Adrenal gland (tissue), 19 donors: ENCODE measurements at regions of chr5 and their contacts with region 1.

Region 1: DNA sequence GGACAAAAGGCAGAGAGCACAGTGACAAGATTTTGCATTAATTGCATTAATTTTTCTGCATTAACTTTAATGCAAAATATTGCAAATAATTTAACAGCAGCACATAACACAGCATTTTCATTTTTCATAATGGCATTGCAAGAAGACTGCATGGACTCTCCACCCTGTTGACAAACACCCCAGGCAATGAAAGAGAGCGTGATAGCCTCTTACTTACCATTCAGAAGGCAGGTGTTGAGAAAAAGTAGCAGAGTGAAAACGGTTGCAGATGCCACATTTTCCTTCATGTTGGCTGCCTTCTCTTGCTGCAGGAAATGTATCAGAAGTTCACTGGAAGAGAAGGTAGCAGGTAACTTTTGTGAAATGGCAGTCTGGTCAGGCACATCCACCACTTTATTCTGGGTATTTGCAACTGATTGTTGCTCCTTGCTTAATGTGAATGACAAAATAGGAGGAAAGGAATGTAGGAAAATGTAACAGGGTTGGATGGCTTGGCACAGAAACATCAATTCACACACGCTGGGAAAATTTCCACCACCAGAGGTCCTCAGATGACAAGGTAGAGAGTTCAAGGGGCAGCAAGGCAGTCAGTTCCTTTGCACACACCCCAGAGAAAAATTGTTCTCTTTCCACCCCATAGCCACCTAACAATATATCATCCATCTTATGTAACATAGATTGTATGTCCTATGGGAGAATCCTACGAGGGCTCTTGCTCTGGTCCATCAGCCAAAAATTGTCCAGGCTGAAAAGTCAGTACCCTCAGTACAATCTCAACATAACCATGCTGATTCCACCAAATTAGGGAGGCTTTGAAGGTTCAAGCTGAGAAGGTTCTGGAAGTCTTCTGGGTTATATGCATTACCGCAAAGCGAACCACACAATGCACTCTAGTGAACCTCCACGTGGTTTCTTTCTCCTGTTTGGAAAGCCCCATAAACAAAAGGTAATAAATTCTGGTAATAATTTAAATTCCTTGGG is 41.9 kb upstream of the AGXT2 start:
- DNase-seq: peak; percentile 46 to 81 (median 67)
- H3K4me3 ChIP-seq: no peak overlapping the region
- H3K27ac ChIP-seq: no peak overlapping the region
- H3K4me1 ChIP-seq: peaks cover 0 to 4% of the 10 kb centered on the region in 2 donors
- H3K27me3 ChIP-seq: no peaks in the 10 kb centered on the region
- CTCF ChIP-seq: peak; percentile 53 to 78 (median 76)
- POLR2A ChIP-seq: no peak

Region 2: GRCh38 chr5:35129918-35130485 is 40.4 kb after region 1 on chr5:
- intact Hi-C with region 1: no loop called
- DNase-seq: no peak
- H3K4me3 ChIP-seq: no peak overlapping the region
- H3K27ac ChIP-seq: no peak overlapping the region
- H3K4me1 ChIP-seq: no peaks in the 10 kb centered on the region
- H3K27me3 ChIP-seq: no peaks in the 10 kb centered on the region
- CTCF ChIP-seq: no peak
- POLR2A ChIP-seq: no peak

Region 3: DNA sequence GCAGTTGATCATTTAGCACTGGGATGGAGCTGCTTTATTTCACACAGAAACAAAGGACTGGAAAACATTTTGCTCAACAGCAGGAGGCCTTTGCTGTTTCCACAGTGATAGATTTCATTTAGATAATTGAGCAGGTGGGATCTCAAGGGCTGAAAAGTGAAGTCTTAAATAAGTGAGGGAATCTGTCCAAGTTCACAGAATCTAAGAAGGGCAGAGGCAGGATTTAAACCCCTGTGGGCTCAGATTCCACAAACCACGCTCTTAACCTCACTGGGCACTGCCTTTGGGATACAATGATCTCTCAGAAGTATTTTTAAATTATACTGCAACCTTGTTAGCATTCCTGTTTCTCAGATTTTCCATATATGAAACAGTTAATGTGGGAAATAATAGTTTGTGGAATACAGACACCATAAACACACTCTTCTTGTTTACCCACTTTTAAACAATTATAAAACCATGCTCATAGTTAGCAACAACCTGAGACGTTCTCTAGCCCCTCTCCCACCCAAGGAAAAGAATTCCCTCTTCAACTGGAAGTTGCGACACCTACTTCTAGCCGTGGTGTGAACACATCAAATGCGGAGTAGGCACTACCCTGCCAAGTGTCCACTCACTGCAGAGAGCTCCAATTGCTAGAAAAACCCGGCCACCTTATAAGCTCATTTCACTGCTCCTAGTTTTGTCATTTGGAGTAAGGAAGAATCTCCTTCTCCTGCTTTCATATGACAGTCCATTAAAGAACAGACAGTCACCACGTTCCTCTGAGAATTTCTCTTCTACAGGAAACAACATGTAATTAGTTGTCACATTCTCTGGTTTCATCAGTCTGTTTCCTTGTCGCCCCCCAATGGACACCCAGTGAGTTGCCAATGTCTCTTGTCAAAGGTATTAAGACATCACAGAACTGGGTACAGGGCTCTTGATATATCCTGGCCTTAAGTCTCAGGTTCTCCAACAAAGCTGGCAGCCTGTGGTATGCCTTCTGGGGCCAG is 93.2 kb after region 1 on chr5:
- intact Hi-C with region 1: loop called in 1 of 2 experiments (anchors 10 kb)
- DNase-seq: peak in 5 of 7 donors; percentile 21 to 75 (median 52)
- H3K4me3 ChIP-seq: no peak overlapping the region
- H3K27ac ChIP-seq: no peak overlapping the region
- H3K4me1 ChIP-seq: no peaks in the 10 kb centered on the region
- H3K27me3 ChIP-seq: no peaks in the 10 kb centered on the region
- CTCF ChIP-seq: peak in 4 of 6 experiments; percentile 19 to 45 (median 39)
- POLR2A ChIP-seq: no peak

Region 4: GRCh38 chr5:35436410-35437057 is 346.9 kb after region 1 on chr5:
- intact Hi-C with region 1: loop called (anchors 10 kb)
- DNase-seq: peak in 6 of 7 donors; percentile 18 to 46 (median 29)
- H3K4me3 ChIP-seq: no peak overlapping the region
- H3K27ac ChIP-seq: no peak overlapping the region
- H3K4me1 ChIP-seq: no peaks in the 10 kb centered on the region
- H3K27me3 ChIP-seq: no peaks in the 10 kb centered on the region
- CTCF ChIP-seq: peak; percentile 43 to 76 (median 60)
- POLR2A ChIP-seq: no peak

Region 5: GRCh38 chr5:35444196-35444595 is 354.6 kb after region 1 on chr5:
- intact Hi-C with region 1: loop called (anchors 10 kb)
- DNase-seq: peak in 4 of 7 donors; percentile 12 to 31 (median 22)
- H3K4me3 ChIP-seq: no peak overlapping the region
- H3K27ac ChIP-seq: no peak overlapping the region
- H3K4me1 ChIP-seq: no peaks in the 10 kb centered on the region
- H3K27me3 ChIP-seq: no peaks in the 10 kb centered on the region
- CTCF ChIP-seq: no peak
- POLR2A ChIP-seq: no peak